ENCODE measurements at regions of chr19 and their contacts with region 1.

Region 1: DNA sequence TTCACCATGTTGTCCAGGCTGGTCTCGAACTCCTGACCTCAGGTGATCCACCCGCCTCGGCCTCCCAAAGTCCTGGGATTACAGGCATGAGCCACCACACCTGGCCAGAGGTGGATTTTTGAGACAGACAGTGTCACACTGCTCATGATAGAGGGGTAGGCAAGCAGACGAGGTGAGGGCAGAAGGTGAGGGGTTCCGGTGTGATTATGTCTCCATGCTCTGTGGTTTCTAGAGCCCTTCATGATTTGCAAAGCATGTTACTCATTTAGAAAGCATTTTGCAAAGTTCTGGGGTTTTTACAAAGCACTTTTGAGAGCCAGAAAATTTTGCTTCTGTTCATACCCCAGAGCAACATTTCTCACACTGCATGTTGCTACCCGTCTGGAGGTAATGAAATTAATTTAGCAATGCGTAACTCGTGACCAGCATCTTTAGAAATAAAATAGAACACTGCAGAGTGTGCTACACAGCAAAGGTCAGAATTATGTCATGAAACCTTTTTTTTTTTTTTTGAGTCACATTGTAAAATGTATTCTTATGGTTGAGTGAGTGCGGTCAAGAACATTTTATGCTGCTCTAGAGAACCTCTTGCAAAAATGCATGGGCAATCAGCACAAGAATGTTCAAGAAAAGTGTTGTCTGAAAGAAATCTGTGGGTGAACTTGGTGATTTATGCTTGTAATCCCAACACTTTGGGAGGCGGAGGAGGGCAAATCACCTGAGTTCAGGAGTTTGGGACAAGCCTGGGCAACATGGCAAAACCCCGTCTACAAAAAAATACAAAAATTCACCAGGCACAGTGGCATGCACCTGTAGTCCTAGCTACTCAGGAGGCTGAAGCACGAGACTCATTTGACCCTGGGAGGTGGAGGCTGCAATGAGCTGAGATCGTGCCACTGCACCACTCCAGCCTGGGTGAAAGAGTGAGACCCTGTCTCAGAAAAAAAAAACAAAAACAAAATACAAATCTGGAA is 58.0 kb downstream of the MAP4K1 start:
- DNase-seq: peak; percentile 99
- ATAC-seq: peak; percentile 81
- H3K4me3 ChIP-seq: no peak overlapping the region; the same call in 1 of the 2 replicates
- H3K27ac ChIP-seq: peak overlapping the region; percentile 70
- H3K4me1 ChIP-seq: peaks cover 53% of the 10 kb centered on the region
- H3K27me3 ChIP-seq: 0 out of 4 replicates have a peak, but pooled peaks cover 0 to under 1% of the 10 kb centered on the region in 2 experiments
- CTCF ChIP-seq: no peak
- EP300 ChIP-seq: peak; percentile 94 to 96
- POLR2A ChIP-seq: no peak
- RAD21 ChIP-seq: peak; percentile 19; the same call in 1 of the 2 replicates

Region 2: GRCh38 chr19:38583219-38583984 is 23.7 kb after region 1 on chr19:
- CTCF ChIA-PET with region 1: interaction called, 4 read pairs
- POLR2A ChIA-PET with region 1: interaction called, 6 read pairs
- RAD21 ChIA-PET with region 1: interaction called, 12 read pairs
- SMC1A ChIA-PET with region 1: interaction called, 3 read pairs
- in situ Hi-C with region 1: no loop called
- intact Hi-C with region 1: loop called (anchors 1 kb)
- DNase-seq: peak; percentile 78
- ATAC-seq: peak; percentile 95
- H3K4me3 ChIP-seq: no peak overlapping the region
- H3K27ac ChIP-seq: peak overlapping the region; percentile 52
- H3K4me1 ChIP-seq: peaks cover 18% of the 10 kb centered on the region
- H3K27me3 ChIP-seq: no peaks in the 10 kb centered on the region
- CTCF ChIP-seq: no peak
- EP300 ChIP-seq: peak; percentile 47 to 51; a peak in 2 of 4 replicates
- POLR2A ChIP-seq: no peak
- RAD21 ChIP-seq: no peak

Region 3: GRCh38 chr19:38676023-38676877 is 116.5 kb after region 1 on chr19:
- CTCF ChIA-PET with region 1: no interaction called
- POLR2A ChIA-PET with region 1: no interaction called
- RAD21 ChIA-PET with region 1: no interaction called
- SMC1A ChIA-PET with region 1: no interaction called
- in situ Hi-C with region 1: no loop called
- intact Hi-C with region 1: no loop called
- DNase-seq: no peak
- ATAC-seq: no peak
- H3K4me3 ChIP-seq: no peak overlapping the region
- H3K27ac ChIP-seq: peak overlapping the region; percentile 79
- H3K4me1 ChIP-seq: peaks cover 49% of the 10 kb centered on the region
- H3K27me3 ChIP-seq: no peaks in the 10 kb centered on the region
- CTCF ChIP-seq: no peak
- EP300 ChIP-seq: no peak
- POLR2A ChIP-seq: no peak
- RAD21 ChIP-seq: no peak

Measured in GM12878 (cell line).